Transverse colon (tissue), 4 donors: ENCODE measurements at regions of chr4 and their contacts with region 1.

Region 1: GRCh38 chr4:170138580-170139194 is 48.9 kb upstream of the AADAT start:
- DNase-seq: peak; percentile 74
- H3K4me3 ChIP-seq: no peak overlapping the region
- H3K27ac ChIP-seq: no peak overlapping the region
- H3K4me1 ChIP-seq: no peaks in the 10 kb centered on the region
- H3K27me3 ChIP-seq: no peaks in the 10 kb centered on the region
- CTCF ChIP-seq: peak; percentile 62 to 75 (median 70)
- EP300 ChIP-seq: no peak
- POLR2A ChIP-seq: no peak

Region 2: GRCh38 chr4:170698334-170698733 is 559.6 kb after region 1 on chr4:
- in situ Hi-C with region 1: no loop called
- intact Hi-C with region 1: no loop called
- DNase-seq: no peak
- H3K4me3 ChIP-seq: no peak overlapping the region
- H3K27ac ChIP-seq: no peak overlapping the region
- H3K4me1 ChIP-seq: no peaks in the 10 kb centered on the region
- H3K27me3 ChIP-seq: no peaks in the 10 kb centered on the region
- CTCF ChIP-seq: no peak
- EP300 ChIP-seq: no peak
- POLR2A ChIP-seq: no peak

Region 3: GRCh38 chr4:170853422-170854021 is 714.8 kb after region 1 on chr4:
- in situ Hi-C with region 1: loop called in 2 of 4 experiments (anchors 25 kb)
- intact Hi-C with region 1: no loop called
- DNase-seq: peak; percentile 49
- H3K4me3 ChIP-seq: no peak overlapping the region
- H3K27ac ChIP-seq: no peak overlapping the region
- H3K4me1 ChIP-seq: peaks cover 0 to 5% (median 0%) of the 10 kb centered on the region in 4 donors
- H3K27me3 ChIP-seq: no peaks in the 10 kb centered on the region
- CTCF ChIP-seq: peak; percentile 52 to 75 (median 61)
- EP300 ChIP-seq: no peak
- POLR2A ChIP-seq: no peak